HCT116 (cell line): ENCODE measurements at regions of chr11 and their contacts with region 1.

Region 1: GRCh38 chr11:34890812-34891211 is 25.4 kb downstream of the APIP start:
- DNase-seq: peak; percentile 56
- ATAC-seq: 0 out of 2 replicates have a peak, but pooled peaks have one; percentile 46
- H3K4me3 ChIP-seq: no peak overlapping the region
- H3K27ac ChIP-seq: no peak overlapping the region
- H3K4me1 ChIP-seq: peaks cover 5 to 10% of the 10 kb centered on the region in 2 experiments; a peak in 2 of 4 replicates
- H3K27me3 ChIP-seq: no peaks in the 10 kb centered on the region
- CTCF ChIP-seq: peak; percentile 40 to 83 (median 67)
- POLR2A ChIP-seq: no peak
- RAD21 ChIP-seq: peak; percentile 90

Region 2: GRCh38 chr11:33808228-33808828 is 1082.5 kb before region 1 on chr11:
- CTCF ChIA-PET with region 1: no interaction called
- POLR2A ChIA-PET with region 1: no interaction called
- RAD21 ChIA-PET with region 1: no interaction called
- intact Hi-C with region 1: loop called (anchors 10 kb)
- DNase-seq: peak; percentile 75
- ATAC-seq: peak; percentile 100
- H3K4me3 ChIP-seq: no peak overlapping the region
- H3K27ac ChIP-seq: no peak overlapping the region
- H3K4me1 ChIP-seq: peaks cover 0 to 6% of the 10 kb centered on the region in 2 experiments; a peak in 1 of 4 replicates
- H3K27me3 ChIP-seq: no peaks in the 10 kb centered on the region
- CTCF ChIP-seq: peak; percentile 78 to 93 (median 90); a peak in 5 of 6 replicates
- POLR2A ChIP-seq: no peak
- RAD21 ChIP-seq: peak; percentile 88

Region 3: DNA sequence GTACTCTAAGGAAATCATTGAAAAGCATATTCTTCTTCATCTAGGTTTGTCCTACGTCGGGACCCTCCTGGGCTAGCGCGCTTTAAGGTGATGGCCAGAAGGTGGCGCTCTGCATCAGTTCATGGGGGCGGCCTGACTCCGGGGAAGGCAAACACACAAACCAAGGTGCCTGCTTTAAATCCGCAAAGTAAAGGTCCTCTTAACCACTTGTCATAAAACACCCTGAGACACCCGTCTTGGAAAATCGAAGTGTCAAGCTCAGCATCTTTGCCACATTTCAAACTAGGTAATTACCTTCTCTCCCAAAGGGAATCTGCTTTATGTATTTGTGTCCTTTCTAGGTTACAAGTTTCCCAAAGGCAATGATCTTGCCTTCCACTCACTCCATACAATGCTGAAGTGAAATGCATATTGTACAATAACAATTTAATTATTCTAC is 1032.9 kb before region 1 on chr11:
- CTCF ChIA-PET with region 1: no interaction called
- POLR2A ChIA-PET with region 1: no interaction called
- RAD21 ChIA-PET with region 1: no interaction called
- intact Hi-C with region 1: loop called (anchors 10 kb)
- DNase-seq: peak; percentile 55
- ATAC-seq: peak; percentile 99
- H3K4me3 ChIP-seq: no peak overlapping the region
- H3K27ac ChIP-seq: no peak overlapping the region
- H3K4me1 ChIP-seq: peaks cover 0 to 3% of the 10 kb centered on the region in 2 experiments; a peak in 1 of 4 replicates
- H3K27me3 ChIP-seq: no peaks in the 10 kb centered on the region
- CTCF ChIP-seq: peak; percentile 88 to 98 (median 95)
- POLR2A ChIP-seq: no peak
- RAD21 ChIP-seq: peak; percentile 97

Region 4: GRCh38 chr11:34174412-34175041 is 716.3 kb before region 1 on chr11:
- CTCF ChIA-PET with region 1: no interaction called
- POLR2A ChIA-PET with region 1: no interaction called
- RAD21 ChIA-PET with region 1: no interaction called
- intact Hi-C with region 1: loop called (anchors 10 kb)
- DNase-seq: peak; percentile 45
- ATAC-seq: peak; percentile 100
- H3K4me3 ChIP-seq: no peak overlapping the region; a peak in 1 of 4 replicates
- H3K27ac ChIP-seq: no peak overlapping the region
- H3K4me1 ChIP-seq: peaks cover 2 to 12% of the 10 kb centered on the region in 2 experiments; a peak in 2 of 4 replicates
- H3K27me3 ChIP-seq: no peaks in the 10 kb centered on the region
- CTCF ChIP-seq: peak; percentile 86 to 97 (median 97)
- POLR2A ChIP-seq: no peak
- RAD21 ChIP-seq: peak; percentile 100

Region 5: DNA sequence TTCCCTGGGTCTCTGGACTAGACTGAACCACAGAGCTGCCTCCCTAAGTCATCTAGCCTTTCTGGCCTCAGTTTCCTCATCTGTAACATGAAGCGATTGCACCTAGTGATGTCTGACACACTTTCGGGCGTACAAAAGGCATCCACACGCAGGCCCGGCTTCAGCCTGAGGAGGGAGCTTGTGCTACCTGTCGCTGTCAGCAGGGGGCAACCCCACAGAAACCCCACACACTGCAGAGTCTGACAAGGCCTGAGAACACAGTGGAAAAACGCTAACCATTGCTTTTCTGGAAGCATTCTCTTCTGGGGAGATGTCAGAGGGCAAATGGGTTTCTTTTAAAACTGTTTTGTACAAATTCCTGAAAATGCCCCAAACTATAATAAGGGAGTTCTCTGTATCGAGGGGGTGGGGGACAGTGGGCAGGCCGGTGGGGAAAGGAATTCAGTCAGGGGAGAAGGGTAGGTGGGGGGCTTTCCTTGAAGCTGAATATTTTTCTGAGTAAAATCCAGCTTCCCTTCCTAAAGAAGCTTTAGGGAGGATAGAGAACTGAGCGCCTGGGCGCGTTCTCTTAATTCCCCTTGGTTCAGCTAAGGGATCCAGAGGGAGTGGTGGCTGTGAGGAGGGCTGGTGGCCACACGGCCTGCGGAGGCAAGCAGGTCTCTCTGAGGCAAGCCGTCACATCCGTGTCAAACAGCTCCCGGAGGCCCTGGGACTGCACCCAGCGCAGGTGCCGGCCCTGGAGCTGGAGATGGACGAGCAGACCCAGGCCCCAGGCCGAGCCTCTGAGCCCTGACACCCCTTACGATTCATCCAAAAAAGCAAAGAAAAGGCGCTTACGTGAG is 377.8 kb before region 1 on chr11:
- CTCF ChIA-PET with region 1: interaction called, 6 read pairs
- POLR2A ChIA-PET with region 1: no interaction called
- RAD21 ChIA-PET with region 1: no interaction called
- intact Hi-C with region 1: loop called (anchors 2 kb)
- DNase-seq: peak; percentile 62
- ATAC-seq: peak; percentile 99
- H3K4me3 ChIP-seq: no peak overlapping the region
- H3K27ac ChIP-seq: no peak overlapping the region
- H3K4me1 ChIP-seq: peaks cover 2 to 22% of the 10 kb centered on the region in 2 experiments; a peak in 2 of 4 replicates
- H3K27me3 ChIP-seq: no peaks in the 10 kb centered on the region
- CTCF ChIP-seq: peak; percentile 66 to 97 (median 91)
- POLR2A ChIP-seq: no peak
- RAD21 ChIP-seq: peak; percentile 69

Region 6: DNA sequence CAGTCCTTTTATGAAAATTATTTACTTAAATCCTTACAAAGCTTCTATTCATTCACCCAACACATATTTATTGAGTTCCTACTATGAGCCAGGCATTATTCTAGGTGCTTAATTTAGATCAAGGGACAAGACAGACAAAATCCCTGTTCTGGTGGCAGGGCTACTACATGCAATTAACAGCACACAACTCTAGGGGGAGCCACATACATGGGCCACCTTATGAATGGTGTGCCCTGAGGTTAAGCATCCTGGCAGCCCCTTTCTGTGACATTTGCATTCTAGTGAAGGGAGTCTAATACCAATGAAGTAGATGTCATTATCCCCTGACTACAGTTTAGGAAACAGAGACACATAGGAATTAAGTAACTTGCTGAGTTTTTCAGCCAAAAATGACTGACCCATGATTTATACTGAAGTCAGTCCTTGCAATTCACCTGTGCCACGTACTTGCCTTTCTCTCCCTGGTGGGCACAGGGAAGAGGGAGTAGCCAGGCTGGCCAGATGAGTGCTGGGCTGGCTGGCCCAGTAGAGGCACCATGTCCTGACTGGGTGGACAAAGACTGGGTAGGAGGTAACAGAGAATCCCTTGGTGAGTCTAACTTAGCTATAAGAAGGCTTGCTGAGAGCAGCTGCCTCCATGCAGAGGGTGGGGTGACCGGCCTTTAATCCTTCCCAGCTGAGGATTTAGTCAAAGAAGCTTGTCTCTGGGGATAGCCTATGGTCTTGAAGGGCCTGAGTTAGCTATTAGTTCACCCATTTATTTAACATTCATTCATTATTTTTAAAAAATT is 325.2 kb before region 1 on chr11:
- CTCF ChIA-PET with region 1: interaction called, 13 read pairs
- POLR2A ChIA-PET with region 1: no interaction called
- RAD21 ChIA-PET with region 1: no interaction called
- intact Hi-C with region 1: no loop called
- DNase-seq: peak; percentile 32
- ATAC-seq: peak; percentile 70
- H3K4me3 ChIP-seq: no peak overlapping the region
- H3K27ac ChIP-seq: no peak overlapping the region
- H3K4me1 ChIP-seq: peaks cover 14 to 33% of the 10 kb centered on the region in 2 experiments
- H3K27me3 ChIP-seq: no peaks in the 10 kb centered on the region
- CTCF ChIP-seq: peak; percentile 52 to 89 (median 86); a peak in 5 of 6 replicates
- POLR2A ChIP-seq: no peak
- RAD21 ChIP-seq: peak; percentile 71

Region 7: GRCh38 chr11:34653826-34654490 is 236.9 kb before region 1 on chr11:
- CTCF ChIA-PET with region 1: no interaction called
- POLR2A ChIA-PET with region 1: no interaction called
- RAD21 ChIA-PET with region 1: no interaction called
- intact Hi-C with region 1: loop called (anchors 10 kb)
- DNase-seq: peak; percentile 93
- ATAC-seq: peak; percentile 92
- H3K4me3 ChIP-seq: peak overlapping the region in 1 of 2 experiments; percentile 12; a peak in 1 of 4 replicates
- H3K27ac ChIP-seq: peak overlapping the region; percentile 50
- H3K4me1 ChIP-seq: peaks cover 35 to 75% of the 10 kb centered on the region in 2 experiments
- H3K27me3 ChIP-seq: no peaks in the 10 kb centered on the region
- CTCF ChIP-seq: peak in 1 of 3 experiments; percentile 8; a peak in 2 of 6 replicates
- POLR2A ChIP-seq: no peak
- RAD21 ChIP-seq: peak; percentile 75